Aorta (tissue), 5 donors: ENCODE measurements at regions of chr22 and their contacts with region 1.

Region 1: GRCh38 chr22:33579448-33580093 is 340.7 kb downstream of the LARGE1 start:
- DNase-seq: peak in 1 of 2 donors; percentile 49
- ATAC-seq: peak; percentile 84
- H3K4me3 ChIP-seq: no peak overlapping the region
- H3K27ac ChIP-seq: no peak overlapping the region
- H3K4me1 ChIP-seq: no peaks in the 10 kb centered on the region
- H3K27me3 ChIP-seq: no peaks in the 10 kb centered on the region

Region 2: DNA sequence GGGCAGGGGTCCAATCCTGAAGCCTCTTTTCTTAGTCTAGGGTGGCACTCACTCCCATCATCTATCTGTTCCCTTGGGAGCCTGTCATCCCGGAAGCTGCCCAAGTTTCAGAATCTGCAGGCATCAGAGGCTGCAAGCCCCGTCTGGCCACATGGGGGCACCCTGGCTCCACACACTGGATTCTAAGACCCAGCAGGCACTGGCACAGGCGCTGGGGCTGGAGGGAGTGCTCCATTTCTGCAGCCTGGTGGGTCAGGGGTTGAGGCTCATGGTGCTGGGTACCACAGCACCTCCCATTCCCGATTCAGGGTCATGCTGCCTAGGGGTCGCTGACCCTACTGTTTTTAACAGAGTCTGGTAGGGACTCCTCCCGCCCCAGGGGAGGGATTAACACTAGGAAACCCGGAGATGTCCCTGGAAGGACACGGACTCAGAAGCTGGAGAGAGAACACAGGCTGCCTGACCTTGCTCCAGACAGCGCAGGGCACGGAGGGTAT is 277.5 kb before region 1 on chr22:
- intact Hi-C with region 1: loop called (anchors 2 to 5 kb)
- DNase-seq: peak; percentile 84 to 93
- ATAC-seq: peak; percentile 82
- H3K4me3 ChIP-seq: no peak overlapping the region
- H3K27ac ChIP-seq: no peak overlapping the region
- H3K4me1 ChIP-seq: no peaks in the 10 kb centered on the region
- H3K27me3 ChIP-seq: no peaks in the 10 kb centered on the region

Region 3: GRCh38 chr22:33519071-33519973 is 60.2 kb before region 1 on chr22:
- intact Hi-C with region 1: loop called (anchors 2 to 10 kb)
- DNase-seq: no peak
- ATAC-seq: peak; percentile 59
- H3K4me3 ChIP-seq: no peak overlapping the region
- H3K27ac ChIP-seq: no peak overlapping the region
- H3K4me1 ChIP-seq: no peaks in the 10 kb centered on the region
- H3K27me3 ChIP-seq: no peaks in the 10 kb centered on the region

Region 4: DNA sequence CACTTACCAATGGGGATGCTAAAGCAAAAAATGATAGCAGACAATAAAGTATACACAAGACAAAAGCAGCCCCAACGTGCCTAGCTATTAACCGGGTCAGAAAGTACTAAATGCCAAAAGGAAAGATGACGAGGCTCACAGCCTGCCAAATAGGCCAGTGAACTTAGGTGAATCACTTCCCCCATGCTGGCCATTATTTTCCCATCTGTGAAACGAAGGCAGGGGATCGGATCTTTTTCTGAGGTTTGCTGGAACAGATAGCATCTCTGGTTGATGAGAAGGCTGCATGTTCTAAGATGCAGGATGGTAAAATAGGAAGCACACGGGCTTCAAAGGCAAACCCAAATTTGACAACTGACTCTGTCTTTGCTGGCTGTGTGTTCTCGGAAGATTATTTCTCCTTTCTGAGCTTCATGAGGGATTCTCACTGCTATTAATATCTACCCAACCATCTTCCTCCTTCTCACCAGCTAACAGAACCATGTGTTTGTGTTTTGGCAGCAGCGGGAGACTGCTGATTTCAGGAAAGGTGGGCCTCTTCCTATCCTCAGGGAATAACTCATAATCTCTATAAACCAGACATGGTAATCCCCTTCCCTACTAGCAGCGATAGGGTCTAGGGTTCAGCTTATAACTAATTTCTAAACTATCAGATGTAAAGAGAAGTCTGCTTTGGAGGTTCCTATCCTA is 50.0 kb before region 1 on chr22:
- intact Hi-C with region 1: loop called in 1 of 2 experiments (anchors 10 kb)
- DNase-seq: no peak
- ATAC-seq: no peak
- H3K4me3 ChIP-seq: no peak overlapping the region
- H3K27ac ChIP-seq: no peak overlapping the region
- H3K4me1 ChIP-seq: peaks cover 0 to 5% of the 10 kb centered on the region in 2 donors
- H3K27me3 ChIP-seq: no peaks in the 10 kb centered on the region

Region 5: DNA sequence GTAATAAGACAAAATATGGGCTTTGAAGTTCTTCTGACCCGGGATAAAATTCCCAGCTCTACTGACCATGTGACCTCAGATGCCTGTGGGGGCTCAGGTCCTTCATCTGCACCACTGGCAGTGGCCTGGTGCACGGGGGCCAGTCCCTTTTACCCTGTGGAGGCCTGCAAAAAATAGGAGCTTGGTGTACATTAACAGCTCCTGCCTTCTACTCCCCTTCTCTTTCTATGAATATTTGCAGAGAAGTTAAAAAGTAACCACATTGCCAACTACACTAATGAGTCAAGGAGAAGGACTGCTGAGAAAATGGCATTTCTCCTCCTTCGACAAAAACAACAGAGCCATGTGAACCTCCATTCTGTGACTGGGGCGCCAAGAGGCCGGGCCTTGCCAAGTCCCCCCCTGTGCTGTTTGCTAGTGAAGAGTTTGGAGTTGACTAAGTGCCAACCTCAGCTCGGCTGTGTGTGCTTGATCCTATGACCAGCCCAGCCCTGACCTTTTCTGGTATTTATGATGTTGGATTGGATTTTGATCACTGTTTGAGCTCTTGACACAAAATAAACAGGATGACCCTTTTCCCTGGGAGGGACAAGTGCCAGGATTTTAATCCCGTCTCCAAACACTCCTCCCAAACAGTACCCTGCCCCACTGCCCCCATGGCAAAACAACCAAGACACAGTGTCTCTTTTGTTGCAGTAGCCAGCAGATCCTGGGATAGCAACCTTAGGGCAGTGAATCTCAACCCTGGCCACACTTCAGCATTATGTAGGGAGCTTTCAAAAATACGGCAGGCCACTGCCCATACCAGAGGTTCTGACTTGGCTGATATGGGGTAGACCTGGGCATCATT is 39.4 kb before region 1 on chr22:
- intact Hi-C with region 1: loop called in 1 of 2 experiments (anchors 5 kb)
- DNase-seq: peak; percentile 64 to 78
- ATAC-seq: peak; percentile 70
- H3K4me3 ChIP-seq: no peak overlapping the region
- H3K27ac ChIP-seq: no peak overlapping the region
- H3K4me1 ChIP-seq: no peaks in the 10 kb centered on the region
- H3K27me3 ChIP-seq: no peaks in the 10 kb centered on the region